ENCODE measurements at regions of chr14 and their contacts with region 1.

Region 1: GRCh38 chr14:70987041-70987440 is 79.8 kb downstream of the PCNX1 start:
- DNase-seq: no peak
- ATAC-seq: no peak; the same call in 1 of the 2 replicates
- H3K4me3 ChIP-seq: no peak overlapping the region
- H3K27ac ChIP-seq: no peak overlapping the region
- H3K4me1 ChIP-seq: no peaks in the 10 kb centered on the region; the same call in 1 of the 2 replicates
- H3K27me3 ChIP-seq: no peaks in the 10 kb centered on the region
- CTCF ChIP-seq: no peak

Region 2: GRCh38 chr14:71004481-71004880 is 17.4 kb after region 1 on chr14:
- CTCF ChIA-PET with region 1: interaction called, 3 read pairs
- POLR2A ChIA-PET with region 1: no interaction called
- intact Hi-C with region 1: loop called (anchors 2 kb)
- DNase-seq: no peak
- ATAC-seq: no peak; the same call in 1 of the 2 replicates
- H3K4me3 ChIP-seq: no peak overlapping the region
- H3K27ac ChIP-seq: no peak overlapping the region
- H3K4me1 ChIP-seq: peaks cover 42% of the 10 kb centered on the region
- H3K27me3 ChIP-seq: no peaks in the 10 kb centered on the region
- CTCF ChIP-seq: no peak

Region 3: DNA sequence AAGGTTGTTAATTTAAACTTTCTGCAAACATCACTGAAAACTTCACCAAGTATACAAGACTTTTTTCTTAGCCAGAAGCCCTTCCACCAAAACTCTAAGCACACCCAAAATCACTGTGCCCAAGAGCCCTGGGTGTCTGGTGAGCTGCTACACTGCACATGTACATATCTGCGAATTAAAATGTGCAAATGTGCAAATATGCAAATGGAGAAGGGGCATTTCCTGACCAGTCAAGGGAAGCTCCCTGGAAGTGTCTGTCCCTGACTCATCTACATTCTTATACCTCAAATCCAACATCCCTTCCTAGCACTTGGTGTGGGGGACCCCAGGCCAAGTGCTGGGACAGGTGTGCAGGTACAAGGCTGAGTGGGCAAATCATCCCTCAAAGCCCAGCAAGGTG is 44.0 kb after region 1 on chr14:
- CTCF ChIA-PET with region 1: no interaction called
- POLR2A ChIA-PET with region 1: no interaction called
- intact Hi-C with region 1: no loop called
- DNase-seq: no peak
- ATAC-seq: no peak
- H3K4me3 ChIP-seq: no peak overlapping the region
- H3K27ac ChIP-seq: no peak overlapping the region
- H3K4me1 ChIP-seq: no peaks in the 10 kb centered on the region
- H3K27me3 ChIP-seq: no peaks in the 10 kb centered on the region
- CTCF ChIP-seq: no peak

Region 4: GRCh38 chr14:71117839-71118743 is 131.1 kb after region 1 on chr14:
- CTCF ChIA-PET with region 1: no interaction called
- POLR2A ChIA-PET with region 1: no interaction called
- intact Hi-C with region 1: no loop called
- DNase-seq: peak; percentile 95
- ATAC-seq: peak; percentile 94
- H3K4me3 ChIP-seq: peak overlapping the region; percentile 14; the same call in 1 of the 2 replicates
- H3K27ac ChIP-seq: peak overlapping the region; percentile 89
- H3K4me1 ChIP-seq: peaks cover 33% of the 10 kb centered on the region
- H3K27me3 ChIP-seq: no peaks in the 10 kb centered on the region
- CTCF ChIP-seq: no peak

Measured in PC-3 (cell line).